ENCODE measurements at regions of chr10 and their contacts with region 1.

Region 1: DNA sequence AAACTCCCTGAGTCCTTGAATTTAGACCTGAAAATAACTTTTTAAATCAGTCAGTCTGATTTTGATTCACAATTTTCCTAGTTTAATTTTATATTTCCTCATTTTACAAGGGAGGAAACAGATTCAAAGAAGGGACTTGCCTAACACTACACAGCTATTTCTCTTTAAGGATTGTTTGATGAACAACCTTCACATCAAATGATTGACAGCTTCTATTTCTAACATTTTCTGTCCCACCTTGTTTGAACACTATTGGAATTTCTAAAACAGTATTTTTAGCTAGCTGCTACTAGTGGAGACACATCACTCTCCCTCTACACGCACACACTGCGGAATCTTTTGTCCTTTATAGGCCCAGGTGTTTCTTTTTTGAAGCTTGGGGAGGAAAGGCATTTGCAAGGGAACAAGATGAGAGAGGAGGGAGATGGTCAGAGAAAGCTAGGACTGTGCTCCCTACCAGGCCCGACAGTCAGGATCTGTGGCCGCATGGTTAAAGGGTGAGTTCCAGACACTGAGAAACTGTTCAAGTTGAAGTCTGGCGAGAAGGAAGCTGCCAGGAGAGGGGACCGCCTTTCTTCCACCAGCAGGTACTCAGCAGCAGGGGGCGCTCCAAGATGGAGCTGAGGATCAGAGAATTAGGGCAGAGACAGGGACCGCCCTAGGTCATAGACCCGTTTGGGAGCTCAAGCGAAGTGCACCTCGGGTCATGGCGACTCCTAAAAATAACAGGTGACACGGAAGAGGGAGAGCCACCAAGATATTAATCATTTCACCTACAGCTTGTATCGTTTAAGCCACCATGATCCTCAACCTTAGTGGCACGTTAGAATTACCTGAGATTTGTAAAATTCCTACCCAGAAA is 49.7 kb downstream of the DNAJC12 start:
- DNase-seq: peak; percentile 83
- H3K4me3 Mint-ChIP-seq: no peak overlapping the region
- H3K27ac Mint-ChIP-seq: peak overlapping the region; percentile 2
- H3K4me1 Mint-ChIP-seq: peaks cover 52% of the 10 kb centered on the region
- H3K27me3 Mint-ChIP-seq: no peaks in the 10 kb centered on the region

Region 2: DNA sequence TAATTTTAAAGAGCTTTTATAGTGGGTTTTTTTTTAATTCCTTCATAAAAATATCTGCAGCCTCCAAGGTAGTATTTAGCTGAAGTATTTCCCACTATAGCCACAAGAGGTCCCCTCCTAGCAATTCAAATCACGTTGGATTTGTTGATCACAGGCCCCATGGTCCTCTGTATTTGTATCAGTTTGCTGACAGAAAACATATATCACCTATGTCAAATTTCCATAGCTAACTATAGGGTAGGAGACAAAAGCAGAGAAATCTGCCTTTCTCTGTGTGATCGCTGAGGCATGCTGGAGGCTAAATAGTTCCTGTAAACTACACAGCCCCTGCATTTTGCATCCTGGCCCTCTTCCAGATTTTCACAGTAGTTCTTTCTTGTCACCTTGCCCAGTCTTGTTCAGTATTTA is 90.5 kb before region 1 on chr10:
- CTCF ChIA-PET with region 1: interaction called, 18 read pairs
- POLR2A ChIA-PET with region 1: interaction called, 5 read pairs
- DNase-seq: peak; percentile 18
- H3K4me3 Mint-ChIP-seq: no peak overlapping the region
- H3K27ac Mint-ChIP-seq: no peak overlapping the region
- H3K4me1 Mint-ChIP-seq: peaks cover 12% of the 10 kb centered on the region
- H3K27me3 Mint-ChIP-seq: peaks cover 36% of the 10 kb centered on the region

Region 3: DNA sequence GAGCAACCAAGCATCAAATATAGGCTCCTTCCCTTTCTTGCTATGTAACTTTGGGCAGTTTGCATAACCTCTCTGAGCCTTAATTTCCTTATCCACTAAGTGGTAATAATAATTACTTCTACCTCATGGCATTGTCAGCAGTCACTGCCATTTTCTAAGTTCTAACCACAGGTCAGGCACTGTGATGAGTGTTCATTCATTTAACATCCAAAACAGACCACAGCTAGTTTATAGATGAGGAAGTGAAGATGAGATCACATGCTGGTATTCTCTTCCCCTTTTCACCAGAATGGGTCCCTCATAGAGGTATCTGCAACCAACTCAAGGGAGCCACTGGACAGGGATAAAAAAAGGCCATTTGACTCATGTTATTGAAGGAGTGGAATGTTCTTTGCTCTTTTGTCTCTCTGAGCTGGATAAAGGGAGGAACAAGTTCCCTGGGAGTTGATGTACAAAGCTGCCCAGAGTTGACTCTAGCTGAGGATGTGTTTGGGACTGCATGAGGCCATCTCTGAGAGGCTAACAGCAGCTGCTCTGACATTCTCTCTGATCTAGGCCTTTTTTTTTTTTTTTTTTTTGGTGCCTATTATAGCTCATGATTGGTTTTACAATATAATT is 15.3 kb before region 1 on chr10:
- CTCF ChIA-PET with region 1: interaction called, 49 read pairs
- POLR2A ChIA-PET with region 1: no interaction called
- DNase-seq: no peak
- H3K4me3 Mint-ChIP-seq: no peak overlapping the region
- H3K27ac Mint-ChIP-seq: no peak overlapping the region
- H3K4me1 Mint-ChIP-seq: peaks cover 48% of the 10 kb centered on the region
- H3K27me3 Mint-ChIP-seq: peaks cover 1% of the 10 kb centered on the region

Region 4: GRCh38 chr10:67812007-67812406 is 23.8 kb after region 1 on chr10:
- CTCF ChIA-PET with region 1: interaction called, 12 read pairs
- POLR2A ChIA-PET with region 1: no interaction called
- DNase-seq: no peak
- H3K4me3 Mint-ChIP-seq: no peak overlapping the region
- H3K27ac Mint-ChIP-seq: no peak overlapping the region
- H3K4me1 Mint-ChIP-seq: peaks cover 25% of the 10 kb centered on the region
- H3K27me3 Mint-ChIP-seq: no peaks in the 10 kb centered on the region

Region 5: GRCh38 chr10:67837541-67838314 is 49.5 kb after region 1 on chr10 and contains the start of gene DNAJC12:
- CTCF ChIA-PET with region 1: interaction called, 17 read pairs
- POLR2A ChIA-PET with region 1: no interaction called
- DNase-seq: no peak
- H3K4me3 Mint-ChIP-seq: peak within 1 kb of the TSS; percentile 49
- H3K27ac Mint-ChIP-seq: no peak within 1 kb of the TSS
- H3K4me1 Mint-ChIP-seq: peaks cover 9% of the 10 kb centered on the region
- H3K27me3 Mint-ChIP-seq: no peaks in the 10 kb centered on the region
- total RNA-seq, gene DNAJC12: 4.1 to 6.1 TPM

Region 6: DNA sequence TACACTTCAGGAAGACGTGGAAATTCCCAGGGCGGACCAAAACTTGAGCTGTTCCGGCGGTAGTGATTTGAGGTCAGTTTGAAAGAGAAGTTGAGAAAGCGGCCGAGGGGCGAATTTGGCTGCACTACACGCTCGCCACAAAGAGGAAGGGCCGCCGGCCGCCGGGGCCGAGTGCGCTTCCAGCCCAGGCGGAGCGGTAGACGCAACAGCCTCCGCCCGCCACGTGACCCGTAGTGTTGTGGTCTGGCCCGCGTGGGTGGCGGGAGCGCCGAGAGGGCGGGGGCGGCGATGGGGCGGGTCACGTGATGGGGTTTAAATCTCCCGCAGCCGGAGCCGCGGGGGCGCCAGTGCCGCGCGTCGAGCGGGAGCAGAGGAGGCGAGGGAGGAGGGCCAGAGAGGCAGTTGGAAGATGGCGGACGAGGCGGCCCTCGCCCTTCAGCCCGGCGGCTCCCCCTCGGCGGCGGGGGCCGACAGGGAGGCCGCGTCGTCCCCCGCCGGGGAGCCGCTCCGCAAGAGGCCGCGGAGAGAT is 96.1 kb after region 1 on chr10 and contains the start of gene SIRT1:
- CTCF ChIA-PET with region 1: interaction called, 16 read pairs
- POLR2A ChIA-PET with region 1: interaction called, 5 read pairs
- DNase-seq: peak; percentile 94
- H3K4me3 Mint-ChIP-seq: peak within 1 kb of the TSS; percentile 94
- H3K27ac Mint-ChIP-seq: peak within 1 kb of the TSS; percentile 95
- H3K4me1 Mint-ChIP-seq: peaks cover 36% of the 10 kb centered on the region
- H3K27me3 Mint-ChIP-seq: no peaks in the 10 kb centered on the region
- total RNA-seq, gene SIRT1: 25.8 to 28.5 TPM

Region 7: DNA sequence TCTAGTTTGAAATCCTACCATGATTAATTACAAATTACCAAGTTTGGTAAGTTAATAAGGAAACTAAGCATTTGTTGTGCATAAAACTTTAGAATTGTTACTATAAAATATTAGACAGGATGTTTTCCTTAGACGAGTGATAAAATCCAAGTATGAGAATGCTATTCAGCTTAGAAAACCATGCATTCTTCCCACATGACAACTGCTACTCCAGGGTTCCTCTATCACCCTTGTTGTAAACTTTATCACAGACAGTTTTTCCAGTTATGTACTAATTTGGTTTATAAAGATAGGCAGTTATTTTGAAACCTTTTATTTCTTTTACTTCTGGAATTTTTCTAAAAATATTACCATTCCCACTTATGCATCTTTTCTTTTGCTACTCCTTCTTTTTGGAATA is 148.2 kb after region 1 on chr10:
- CTCF ChIA-PET with region 1: no interaction called
- POLR2A ChIA-PET with region 1: no interaction called
- DNase-seq: no peak
- H3K4me3 Mint-ChIP-seq: no peak overlapping the region
- H3K27ac Mint-ChIP-seq: no peak overlapping the region
- H3K4me1 Mint-ChIP-seq: no peaks in the 10 kb centered on the region
- H3K27me3 Mint-ChIP-seq: no peaks in the 10 kb centered on the region

Region 8: GRCh38 chr10:67976292-67977245 is 188.3 kb after region 1 on chr10:
- CTCF ChIA-PET with region 1: no interaction called
- POLR2A ChIA-PET with region 1: no interaction called
- DNase-seq: no peak
- H3K4me3 Mint-ChIP-seq: no peak overlapping the region
- H3K27ac Mint-ChIP-seq: no peak overlapping the region
- H3K4me1 Mint-ChIP-seq: peaks cover 12% of the 10 kb centered on the region
- H3K27me3 Mint-ChIP-seq: no peaks in the 10 kb centered on the region

Region 9: GRCh38 chr10:68023292-68023691 is 235.0 kb after region 1 on chr10:
- CTCF ChIA-PET with region 1: no interaction called
- POLR2A ChIA-PET with region 1: no interaction called
- DNase-seq: no peak
- H3K4me3 Mint-ChIP-seq: no peak overlapping the region
- H3K27ac Mint-ChIP-seq: no peak overlapping the region
- H3K4me1 Mint-ChIP-seq: peaks cover 3% of the 10 kb centered on the region
- H3K27me3 Mint-ChIP-seq: no peaks in the 10 kb centered on the region

Region 10: DNA sequence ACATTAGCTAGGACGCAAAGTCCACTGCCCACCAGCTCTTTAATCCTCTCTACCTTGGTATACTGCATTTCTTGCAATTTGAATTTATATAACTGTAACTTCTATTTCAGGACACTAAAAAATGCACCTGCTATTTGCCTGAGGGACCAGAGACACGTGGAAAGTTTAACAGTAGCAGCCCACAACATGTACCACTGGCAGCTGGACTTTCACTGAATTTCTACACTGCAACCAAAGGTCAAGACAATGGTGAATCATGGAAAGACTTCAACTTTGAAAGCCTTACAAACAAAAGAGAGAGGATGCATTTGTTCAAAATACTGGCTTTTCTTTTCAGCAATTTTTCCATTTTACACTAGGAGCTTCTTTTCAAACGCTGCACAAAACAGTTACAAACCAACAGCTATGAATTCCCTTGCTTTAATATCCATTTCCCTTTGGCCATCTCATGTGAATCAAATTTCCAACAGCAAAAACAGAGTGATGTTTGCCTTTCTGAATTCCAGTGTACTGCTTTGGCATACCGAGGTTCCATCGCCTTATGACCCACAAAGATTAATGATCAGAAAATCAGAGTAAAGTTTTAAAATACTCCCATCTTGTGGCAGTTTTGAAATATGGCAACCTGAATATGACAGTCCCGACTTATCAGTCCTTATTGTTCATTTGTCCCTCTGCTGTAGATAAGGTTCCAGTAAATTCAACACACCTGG is 513.7 kb after region 1 on chr10:
- CTCF ChIA-PET with region 1: interaction called, 16 read pairs
- POLR2A ChIA-PET with region 1: no interaction called
- DNase-seq: no peak
- H3K4me3 Mint-ChIP-seq: no peak overlapping the region
- H3K27ac Mint-ChIP-seq: no peak overlapping the region
- H3K4me1 Mint-ChIP-seq: no peaks in the 10 kb centered on the region
- H3K27me3 Mint-ChIP-seq: no peaks in the 10 kb centered on the region

Measured in activated CD4-positive, alpha-beta memory T cell treated with anti-CD3 and anti-CD28 coated beads, Interleukin-2, amount 10 ng/mL, durations not matched to agents 7 days and 5 days (primary cell).